Vagina (tissue), 2 donors: ENCODE measurements at regions of chr14 and their contacts with region 1.

Region 1: DNA sequence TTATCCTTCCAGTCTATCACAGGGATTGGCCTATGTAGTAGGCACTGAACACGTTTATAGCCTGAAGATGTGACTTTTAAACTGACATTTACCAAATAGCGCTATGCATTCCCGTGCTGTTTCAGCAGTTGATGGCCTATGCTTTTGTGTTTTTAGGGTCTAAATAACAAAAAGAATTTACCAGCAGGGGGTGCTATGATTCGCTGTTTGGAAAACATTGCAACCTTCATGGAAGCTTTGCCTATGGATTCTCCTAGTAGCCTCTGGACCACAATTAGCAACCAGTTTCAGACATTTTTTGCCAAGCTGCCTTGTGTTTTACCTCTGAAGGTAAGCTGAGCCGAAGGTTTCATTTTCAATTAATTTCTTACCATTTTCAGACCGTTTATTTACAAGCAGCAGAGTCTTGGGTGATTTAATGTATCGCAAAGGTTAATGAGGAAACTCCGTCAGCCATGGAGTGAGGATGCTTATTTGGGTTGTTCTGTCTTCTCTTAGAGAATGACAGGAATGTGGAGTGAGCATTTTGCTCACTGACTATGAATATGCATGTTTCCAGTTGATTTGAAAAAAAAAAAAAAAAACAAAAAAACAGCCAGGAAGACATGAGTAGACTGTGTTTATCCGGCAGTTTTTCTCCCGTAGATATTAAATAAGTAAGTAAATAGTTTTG is 133.1 kb downstream of the PRIMA1 start:
- DNase-seq: no peak
- H3K4me3 ChIP-seq: no peak overlapping the region
- H3K27ac ChIP-seq: no peak overlapping the region
- H3K4me1 ChIP-seq: no peaks in the 10 kb centered on the region
- H3K27me3 ChIP-seq: no peaks in the 10 kb centered on the region
- CTCF ChIP-seq: peak in 2 of 3 experiments; percentile 46 to 67
- POLR2A ChIP-seq: no peak

Region 2: GRCh38 chr14:93788543-93789227 is 133.5 kb after region 1 on chr14:
- intact Hi-C with region 1: loop called (anchors 5 kb)
- DNase-seq: no peak
- H3K4me3 ChIP-seq: peak overlapping the region; percentile 58 to 69
- H3K27ac ChIP-seq: peak overlapping the region; percentile 84
- H3K4me1 ChIP-seq: peaks cover 37% of the 10 kb centered on the region
- H3K27me3 ChIP-seq: no peaks in the 10 kb centered on the region
- CTCF ChIP-seq: peak in 1 of 3 experiments; percentile 36
- POLR2A ChIP-seq: peak in 1 of 2 donors; percentile 33

Region 3: GRCh38 chr14:93892923-93893558 is 237.8 kb after region 1 on chr14:
- intact Hi-C with region 1: loop called (anchors 5 kb)
- DNase-seq: no peak
- H3K4me3 ChIP-seq: no peak overlapping the region
- H3K27ac ChIP-seq: peak overlapping the region; percentile 49
- H3K4me1 ChIP-seq: peaks cover 10% of the 10 kb centered on the region
- H3K27me3 ChIP-seq: no peaks in the 10 kb centered on the region
- CTCF ChIP-seq: peak; percentile 90 to 98 (median 97)
- POLR2A ChIP-seq: no peak